ENCODE measurements at regions of chr9 and their contacts with region 1.

Region 1: DNA sequence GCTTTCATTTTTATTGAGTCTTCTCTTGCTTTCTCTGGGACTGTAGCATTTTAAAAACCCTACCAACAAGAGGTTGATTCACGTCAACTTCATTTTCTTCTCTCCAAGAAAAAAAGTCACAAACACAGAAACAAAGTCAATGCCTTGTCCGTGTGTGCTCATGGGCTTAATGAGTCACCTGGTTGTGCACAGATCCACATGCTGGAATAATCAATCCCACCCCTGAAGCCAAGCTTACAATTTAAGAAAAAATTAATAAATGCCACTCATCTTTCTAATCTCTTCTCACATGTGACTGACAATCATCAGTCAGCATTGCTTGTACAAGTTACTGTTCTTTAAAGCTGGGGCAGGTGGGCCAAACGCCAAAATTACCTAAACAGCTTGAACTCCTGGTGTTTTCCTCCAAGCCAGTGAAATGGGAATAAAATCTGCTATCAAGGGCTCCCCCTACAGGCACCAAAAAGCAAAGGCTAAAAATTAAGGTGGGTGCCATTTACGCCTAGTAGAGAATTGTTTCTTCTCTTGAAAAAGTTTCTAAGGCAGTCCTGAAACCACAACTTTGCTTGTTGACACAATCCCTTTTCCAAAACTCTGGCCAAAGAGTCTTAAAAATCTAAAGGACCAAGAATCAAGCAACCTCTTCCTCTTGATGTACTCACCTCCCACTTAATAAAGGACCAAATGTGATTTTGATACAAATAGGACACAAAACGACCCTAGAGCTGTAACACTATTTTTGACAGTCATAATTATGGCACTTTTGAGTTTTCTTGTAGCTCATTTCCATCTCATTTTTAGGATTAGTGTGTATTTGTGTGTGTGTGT is 21.3 kb downstream of the TRMO start:
- DNase-seq: peak; percentile 27
- ATAC-seq: peak; percentile 80
- H3K4me3 ChIP-seq: no peak overlapping the region
- H3K27ac ChIP-seq: no peak overlapping the region
- H3K4me1 ChIP-seq: no peaks in the 10 kb centered on the region
- H3K27me3 ChIP-seq: no peaks in the 10 kb centered on the region
- CTCF ChIP-seq: peak; percentile 56 to 87 (median 78); a peak in 5 of 6 replicates
- POLR2A ChIP-seq: no peak
- RAD21 ChIP-seq: peak; percentile 77

Region 2: GRCh38 chr9:97468658-97469448 is 432.1 kb before region 1 on chr9:
- CTCF ChIA-PET with region 1: interaction called, 3 read pairs
- POLR2A ChIA-PET with region 1: no interaction called
- RAD21 ChIA-PET with region 1: no interaction called
- intact Hi-C with region 1: loop called (anchors 5 kb)
- DNase-seq: peak; percentile 28
- ATAC-seq: peak; percentile 98
- H3K4me3 ChIP-seq: no peak overlapping the region
- H3K27ac ChIP-seq: no peak overlapping the region
- H3K4me1 ChIP-seq: no peaks in the 10 kb centered on the region
- H3K27me3 ChIP-seq: no peaks in the 10 kb centered on the region
- CTCF ChIP-seq: peak; percentile 68 to 87 (median 72); a peak in 5 of 6 replicates
- POLR2A ChIP-seq: no peak
- RAD21 ChIP-seq: peak; percentile 91

Region 3: GRCh38 chr9:97710356-97711222 is 190.4 kb before region 1 on chr9:
- CTCF ChIA-PET with region 1: interaction called, 7 read pairs
- POLR2A ChIA-PET with region 1: no interaction called
- RAD21 ChIA-PET with region 1: no interaction called
- intact Hi-C with region 1: loop called (anchors 1 kb)
- DNase-seq: peak; percentile 47
- ATAC-seq: peak; percentile 88
- H3K4me3 ChIP-seq: no peak overlapping the region
- H3K27ac ChIP-seq: no peak overlapping the region
- H3K4me1 ChIP-seq: peaks cover 11 to 13% of the 10 kb centered on the region in 2 experiments
- H3K27me3 ChIP-seq: no peaks in the 10 kb centered on the region
- CTCF ChIP-seq: peak; percentile 71 to 89 (median 82)
- POLR2A ChIP-seq: no peak
- RAD21 ChIP-seq: peak; percentile 95

Region 4: GRCh38 chr9:97890038-97890437 is 10.9 kb before region 1 on chr9:
- CTCF ChIA-PET with region 1: interaction called, 30 read pairs
- POLR2A ChIA-PET with region 1: no interaction called
- RAD21 ChIA-PET with region 1: no interaction called
- intact Hi-C with region 1: no loop called
- DNase-seq: no peak
- ATAC-seq: peak; percentile 89
- H3K4me3 ChIP-seq: no peak overlapping the region
- H3K27ac ChIP-seq: no peak overlapping the region
- H3K4me1 ChIP-seq: no peaks in the 10 kb centered on the region
- H3K27me3 ChIP-seq: no peaks in the 10 kb centered on the region
- CTCF ChIP-seq: peak; percentile 39 to 97 (median 94); a peak in 5 of 6 replicates
- POLR2A ChIP-seq: no peak
- RAD21 ChIP-seq: peak; percentile 42; the same call in 1 of the 2 replicates

Measured in HCT116 (cell line).